BJ (cell line): ENCODE measurements at regions of chr17 and their contacts with region 1.

Region 1: GRCh38 chr17:76353599-76354316 is at the start of gene PRPSAP1:
- DNase-seq: no peak
- H3K4me3 ChIP-seq: peak within 1 kb of the TSS; percentile 93
- H3K27me3 ChIP-seq: no peaks in the 10 kb centered on the region
- CTCF ChIP-seq: peak; percentile 80
- polyA plus RNA-seq, gene PRPSAP1: 68.5 and 72.8 TPM in 2 replicates

Region 2: GRCh38 chr17:75830164-75830929 is 523.4 kb before region 1 on chr17:
- CTCF ChIA-PET with region 1: no interaction called
- POLR2A ChIA-PET with region 1: no interaction called
- DNase-seq: no peak
- H3K4me3 ChIP-seq: no peak overlapping the region
- H3K27me3 ChIP-seq: no peaks in the 10 kb centered on the region
- CTCF ChIP-seq: peak; percentile 57

Region 3: GRCh38 chr17:76365256-76365903 is 11.6 kb after region 1 on chr17:
- CTCF ChIA-PET with region 1: interaction called, 12 read pairs
- POLR2A ChIA-PET with region 1: interaction called, 7 read pairs
- DNase-seq: no peak
- H3K4me3 ChIP-seq: no peak overlapping the region
- H3K27me3 ChIP-seq: no peaks in the 10 kb centered on the region
- CTCF ChIP-seq: peak; percentile 47

Region 4: GRCh38 chr17:76370261-76370993 is 16.7 kb after region 1 on chr17:
- CTCF ChIA-PET with region 1: interaction called, 12 read pairs
- POLR2A ChIA-PET with region 1: interaction called, 7 read pairs
- DNase-seq: peak; percentile 95
- H3K4me3 ChIP-seq: no peak overlapping the region
- H3K27me3 ChIP-seq: no peaks in the 10 kb centered on the region
- CTCF ChIP-seq: peak; percentile 63

Region 5: DNA sequence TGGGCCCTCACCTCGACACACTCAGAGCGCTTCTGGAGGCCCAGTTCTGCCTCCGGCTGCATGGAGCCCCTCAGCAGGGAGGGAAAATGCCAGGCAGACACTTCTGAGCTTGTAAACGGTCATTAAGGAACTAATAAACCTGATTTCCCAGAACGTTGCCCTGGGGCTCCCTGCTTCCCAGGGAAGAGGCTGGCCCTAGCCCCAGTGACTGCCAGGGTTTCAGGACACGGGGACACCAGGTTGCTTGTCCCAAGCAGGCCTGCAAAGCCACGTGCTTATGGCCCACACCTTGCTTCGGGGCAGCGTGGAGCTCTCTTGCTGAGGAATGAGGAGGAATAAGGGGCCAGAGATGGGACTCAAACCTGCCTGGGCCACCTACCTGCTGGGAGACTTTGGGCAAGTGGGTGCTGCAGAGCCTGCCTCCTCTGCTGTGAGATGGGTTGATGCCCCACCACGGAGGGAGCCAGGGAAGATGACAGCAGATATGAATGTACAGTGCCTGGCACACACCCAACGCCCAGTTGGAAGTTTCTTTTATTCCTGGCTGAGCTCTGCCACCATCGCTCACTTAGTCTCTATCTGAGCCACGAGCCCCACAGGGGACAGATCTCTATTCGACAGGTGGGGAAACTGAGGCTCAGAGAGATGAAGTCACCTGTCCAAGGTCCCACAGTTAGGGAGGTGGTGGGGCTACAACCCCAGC is 142.1 kb after region 1 on chr17:
- CTCF ChIA-PET with region 1: no interaction called
- POLR2A ChIA-PET with region 1: interaction called, 23 read pairs
- DNase-seq: no peak
- H3K4me3 ChIP-seq: no peak overlapping the region
- H3K27me3 ChIP-seq: no peaks in the 10 kb centered on the region
- CTCF ChIP-seq: no peak